Colonic mucosa (tissue), 4 donors: ENCODE measurements at regions of chr12 and their contacts with region 1.

Region 1: DNA sequence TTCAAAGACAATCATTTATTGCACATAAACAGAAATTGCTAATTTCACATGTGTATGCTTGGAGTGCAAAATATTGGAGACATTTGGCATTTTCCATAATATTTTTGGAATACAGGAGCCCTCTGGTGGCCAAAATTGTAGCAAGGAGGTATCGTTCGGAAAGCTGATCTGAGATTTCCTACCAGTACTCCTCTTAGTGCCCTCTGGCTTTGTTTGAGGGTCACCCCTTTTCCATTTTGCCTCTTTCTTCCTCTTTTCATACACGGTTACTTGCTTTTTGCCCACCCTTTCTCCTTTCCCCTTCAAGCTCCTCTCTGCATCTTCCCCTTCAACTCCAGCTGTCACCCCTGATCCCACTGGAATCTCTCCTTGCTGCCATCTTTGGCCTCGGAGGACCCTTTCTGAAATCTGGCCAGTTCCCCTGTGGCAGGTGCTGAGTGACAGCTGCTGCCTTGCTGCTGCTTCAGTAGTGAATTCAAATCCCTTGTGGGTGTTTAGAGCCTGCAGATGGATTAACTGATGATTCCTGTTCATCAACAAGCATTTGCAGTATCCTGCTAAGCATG is 164.6 kb upstream of the PARP11 start:
- DNase-seq: peak; percentile 79
- H3K4me3 ChIP-seq: no peak overlapping the region
- H3K27ac ChIP-seq: peak overlapping the region; percentile 52
- H3K4me1 ChIP-seq: peaks cover 7% of the 10 kb centered on the region
- H3K27me3 ChIP-seq: no peaks in the 10 kb centered on the region
- CTCF ChIP-seq: peak; percentile 62

Region 2: DNA sequence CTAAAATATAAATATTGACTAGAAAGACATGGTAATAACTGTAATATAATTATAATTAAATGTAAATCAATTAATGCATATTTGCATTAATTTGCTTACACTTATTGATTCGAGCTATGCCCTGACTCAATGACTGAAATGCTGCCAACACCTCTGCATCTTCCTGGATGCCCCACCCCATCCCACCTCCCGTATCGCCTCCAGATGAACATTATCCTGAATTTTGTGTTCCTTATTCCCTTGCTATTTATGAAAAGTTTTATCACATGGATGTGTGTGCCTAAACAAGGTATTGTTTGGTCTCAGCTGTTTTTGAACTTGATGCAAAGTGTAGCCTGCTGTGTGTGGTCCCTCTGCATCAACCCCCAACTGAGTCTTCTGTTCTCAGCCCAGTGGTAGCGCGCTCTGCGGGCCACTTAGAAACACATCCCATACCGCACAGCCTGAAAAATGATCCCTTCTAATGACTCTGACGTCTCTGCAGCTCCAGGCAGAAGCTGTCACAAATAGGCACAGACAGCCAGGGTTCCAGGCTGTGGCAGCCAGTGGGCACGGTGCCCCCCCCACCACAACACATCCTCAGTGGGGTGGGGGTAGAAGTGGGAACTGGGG is 450.3 kb before region 1 on chr12:
- intact Hi-C with region 1: no loop called
- DNase-seq: no peak
- H3K4me3 ChIP-seq: no peak overlapping the region
- H3K27ac ChIP-seq: no peak overlapping the region
- H3K4me1 ChIP-seq: no peaks in the 10 kb centered on the region
- H3K27me3 ChIP-seq: no peaks in the 10 kb centered on the region
- CTCF ChIP-seq: no peak

Region 3: GRCh38 chr12:3885277-3886094 is 152.3 kb before region 1 on chr12:
- intact Hi-C with region 1: loop called (anchors 5 kb)
- DNase-seq: peak; percentile 29
- H3K4me3 ChIP-seq: peak overlapping the region; percentile 21
- H3K27ac ChIP-seq: peak overlapping the region; percentile 52
- H3K4me1 ChIP-seq: peaks cover 3% of the 10 kb centered on the region
- H3K27me3 ChIP-seq: no peaks in the 10 kb centered on the region
- CTCF ChIP-seq: peak; percentile 64

Region 4: GRCh38 chr12:3998968-3999826 is 38.6 kb before region 1 on chr12:
- intact Hi-C with region 1: loop called (anchors 2 kb)
- DNase-seq: peak; percentile 50
- H3K4me3 ChIP-seq: no peak overlapping the region
- H3K27ac ChIP-seq: no peak overlapping the region
- H3K4me1 ChIP-seq: no peaks in the 10 kb centered on the region
- H3K27me3 ChIP-seq: no peaks in the 10 kb centered on the region
- CTCF ChIP-seq: no peak

Region 5: DNA sequence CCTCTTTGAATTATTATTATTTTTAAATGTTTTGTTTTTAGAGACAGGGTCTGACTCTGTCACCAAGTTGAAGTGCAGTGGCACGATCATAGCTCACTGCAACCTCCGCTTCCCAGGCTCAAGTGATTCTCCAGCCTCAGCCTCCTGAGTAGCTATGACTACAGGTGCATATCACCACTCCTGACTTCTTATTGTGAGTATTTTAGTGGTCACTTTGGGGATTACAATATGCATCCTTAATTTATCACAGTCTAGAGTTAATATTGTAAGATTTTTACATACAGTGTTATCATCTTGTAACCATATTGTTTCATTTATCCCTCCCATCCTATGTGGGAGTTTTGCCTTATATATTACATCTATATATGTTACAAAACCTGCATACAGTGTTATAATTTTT is 328.3 kb after region 1 on chr12:
- intact Hi-C with region 1: no loop called
- DNase-seq: no peak
- H3K4me3 ChIP-seq: no peak overlapping the region
- H3K27ac ChIP-seq: no peak overlapping the region
- H3K4me1 ChIP-seq: no peaks in the 10 kb centered on the region
- H3K27me3 ChIP-seq: no peaks in the 10 kb centered on the region
- CTCF ChIP-seq: no peak